ENCODE measurements at regions of chr14 and their contacts with region 1.

Region 1: GRCh38 chr14:55133416-55133815 is 4.4 kb downstream of the LGALS3 start:
- DNase-seq: no peak

Region 2: DNA sequence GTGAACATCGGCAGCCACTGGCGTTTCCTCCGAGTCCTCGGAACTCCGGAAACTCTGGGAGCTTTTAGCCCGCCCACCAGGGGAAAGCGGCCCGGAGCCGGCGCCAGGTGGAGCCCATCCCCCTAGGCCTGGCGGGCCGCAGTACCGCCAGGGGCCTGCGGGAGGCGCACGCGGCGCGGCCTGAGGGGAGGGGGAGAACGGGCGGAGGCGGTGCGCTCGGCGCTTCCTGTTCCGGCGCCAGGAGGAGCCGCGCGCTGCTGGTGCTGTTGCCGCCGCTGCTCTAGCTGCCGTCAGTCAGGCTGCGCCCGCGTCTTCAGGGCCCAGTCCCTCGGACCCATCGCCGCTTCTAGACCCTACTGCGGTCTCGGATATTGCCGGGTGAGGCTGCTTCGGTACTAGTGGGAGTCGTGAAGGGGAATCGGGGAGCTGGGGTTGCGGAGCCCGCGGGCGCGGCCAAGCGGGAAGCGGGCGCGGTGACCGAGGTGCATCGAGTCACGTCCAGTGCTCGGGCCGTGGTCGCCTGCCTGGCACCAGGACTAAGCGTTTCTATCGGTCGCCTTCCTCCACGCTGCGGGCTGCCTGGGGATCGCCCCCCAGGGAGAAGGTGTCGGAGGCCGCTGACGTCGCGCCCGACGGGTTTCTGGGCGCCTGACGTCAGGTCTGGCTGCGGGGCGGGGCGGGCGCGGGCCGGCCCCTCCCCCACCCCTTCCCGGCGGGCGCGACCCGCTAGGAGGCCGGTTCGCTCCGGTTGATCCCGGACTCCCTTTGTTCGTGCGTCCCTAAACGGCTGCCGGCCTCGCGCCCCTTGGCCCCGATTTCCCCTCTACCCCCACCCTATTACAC is 81.8 kb before region 1 on chr14 and contains the start of gene MAPK1IP1L:
- intact Hi-C with region 1: loop called (anchors 5 kb)
- DNase-seq: peak; percentile 97
- total RNA-seq, gene MAPK1IP1L: 75.2 TPM

Region 3: DNA sequence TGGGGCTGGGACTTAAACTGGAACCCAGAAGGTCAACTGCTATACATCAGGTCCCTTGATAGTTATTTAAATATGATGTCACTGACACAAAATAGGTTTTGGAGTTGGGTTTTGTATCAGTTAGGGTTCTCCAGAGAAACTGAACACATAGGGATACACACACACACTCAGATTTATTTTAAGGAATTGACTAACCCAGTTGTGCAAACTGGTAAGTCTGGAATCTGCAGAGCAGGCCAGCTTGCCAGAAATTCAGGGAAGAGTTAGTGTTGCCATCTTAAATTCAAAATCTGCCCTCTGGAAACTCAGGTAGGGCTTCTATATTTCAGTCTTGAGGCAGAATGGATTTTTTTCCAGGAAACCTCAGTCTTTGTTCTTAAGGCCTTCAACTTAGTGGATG is 45.1 kb before region 1 on chr14:
- intact Hi-C with region 1: loop called (anchors 2 kb)
- DNase-seq: no peak

Region 4: GRCh38 chr14:55102141-55102621 is 31.2 kb before region 1 on chr14:
- intact Hi-C with region 1: loop called (anchors 5 kb)
- DNase-seq: no peak

Measured in cardiac septum (tissue), 1 donor.